ENCODE measurements at regions of chr1 and their contacts with region 1.

Region 1: GRCh38 chr1:187655175-187655574 is 826.4 kb downstream of the PLA2G4A start:
- DNase-seq: peak; percentile 52
- H3K4me3 ChIP-seq: no peak overlapping the region
- H3K27ac ChIP-seq: peak overlapping the region; percentile 62
- H3K4me1 ChIP-seq: peaks cover 5% of the 10 kb centered on the region
- H3K27me3 ChIP-seq: no peaks in the 10 kb centered on the region
- CTCF ChIP-seq: no peak

Region 2: GRCh38 chr1:187691439-187691838 is 36.3 kb after region 1 on chr1:
- CTCF ChIA-PET with region 1: no interaction called
- dilution Hi-C with region 1: no loop called
- in situ Hi-C with region 1: no loop called
- intact Hi-C with region 1: loop called (anchors 5 kb)
- DNase-seq: peak; percentile 95
- H3K4me3 ChIP-seq: no peak overlapping the region
- H3K27ac ChIP-seq: peak overlapping the region; percentile 69
- H3K4me1 ChIP-seq: peaks cover 34% of the 10 kb centered on the region
- H3K27me3 ChIP-seq: no peaks in the 10 kb centered on the region
- CTCF ChIP-seq: no peak